Left lung (tissue), 14 donors: ENCODE measurements at regions of chr1 and their contacts with region 1.

Region 1: GRCh38 chr1:34460193-34460592 is 283.5 kb downstream of the C1orf94 start:
- DNase-seq: peak in 2 of 4 donors; percentile 13 to 41
- ATAC-seq: peak; percentile 79
- H3K4me3 ChIP-seq: no peak overlapping the region
- H3K27ac ChIP-seq: no peak overlapping the region
- H3K4me1 ChIP-seq: no peaks in the 10 kb centered on the region
- H3K27me3 ChIP-seq: no peaks in the 10 kb centered on the region
- CTCF ChIP-seq: peak; percentile 44 to 59

Region 2: GRCh38 chr1:34742667-34743270 is 282.6 kb after region 1 on chr1:
- intact Hi-C with region 1: loop called in 1 of 2 experiments (anchors 10 kb)
- DNase-seq: peak; percentile 43 to 93 (median 67)
- ATAC-seq: peak; percentile 98
- H3K4me3 ChIP-seq: no peak overlapping the region
- H3K27ac ChIP-seq: no peak overlapping the region
- H3K4me1 ChIP-seq: no peaks in the 10 kb centered on the region
- H3K27me3 ChIP-seq: peaks cover 0 to 40% of the 10 kb centered on the region in 2 donors
- CTCF ChIP-seq: peak; percentile 90 to 95